Activated CD4-positive, alpha-beta T cell treated with anti-CD3 and anti-CD28 coated beads for 36 hours (primary cell): ENCODE measurements at regions of chr2 and their contacts with region 1.

Region 1: GRCh38 chr2:240205348-240205747 is 64.9 kb upstream of the OTOS start:
- DNase-seq: peak; percentile 87
- ATAC-seq: peak; percentile 99
- H3K4me3 Mint-ChIP-seq: no peak overlapping the region
- H3K27ac Mint-ChIP-seq: no peak overlapping the region
- H3K4me1 Mint-ChIP-seq: peaks cover 10% of the 10 kb centered on the region
- H3K27me3 Mint-ChIP-seq: peaks cover 29% of the 10 kb centered on the region

Region 2: DNA sequence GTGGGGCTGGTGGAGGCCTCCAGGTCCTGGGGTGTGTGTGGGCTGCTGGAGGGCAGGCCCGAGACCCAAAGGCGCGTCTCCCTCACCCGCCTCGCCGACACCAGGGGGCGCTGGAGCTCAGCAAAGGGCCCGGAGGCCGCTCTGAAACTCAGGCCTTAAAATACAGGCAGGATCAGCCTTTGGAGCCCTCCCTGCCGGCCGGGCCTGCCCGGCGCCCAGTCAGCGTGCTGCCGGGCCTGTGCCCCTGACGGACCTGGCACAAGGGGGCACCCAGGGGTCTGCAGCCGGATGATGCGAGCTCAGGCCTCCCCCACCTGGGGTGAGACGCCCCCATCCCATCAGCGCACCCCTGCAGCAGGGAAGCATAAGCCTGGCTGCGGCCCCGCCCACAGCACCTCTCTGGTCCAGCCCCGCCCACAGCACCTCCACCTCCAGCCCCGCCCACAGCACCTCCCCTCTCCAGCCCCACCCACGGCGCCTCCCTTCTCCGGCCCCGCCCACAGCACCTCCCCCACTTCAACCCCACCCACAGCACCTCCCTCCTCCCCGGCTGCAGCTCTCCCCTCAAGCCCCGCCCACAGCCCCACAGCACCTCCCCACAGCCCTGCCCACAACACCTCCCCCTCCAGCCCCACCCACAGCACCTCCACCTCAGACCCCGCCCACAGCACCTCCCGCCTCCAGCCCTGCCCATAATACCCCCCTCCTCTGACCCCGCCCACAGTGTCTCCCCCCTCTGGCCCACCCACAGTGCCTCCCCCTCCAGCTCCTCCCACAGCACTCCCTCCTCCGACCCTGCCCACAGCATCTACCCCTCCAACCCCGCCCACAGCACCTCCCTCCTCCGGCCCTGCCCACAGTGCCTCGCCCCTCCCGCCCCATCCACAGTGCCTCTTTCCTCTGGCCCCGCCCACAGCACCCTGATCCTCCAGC is 27.9 kb after region 1 on chr2:
- CTCF ChIA-PET with region 1: interaction called, 3 read pairs
- POLR2A ChIA-PET with region 1: interaction called, 3 read pairs
- intact Hi-C with region 1: loop called in 1 of 2 experiments (anchors 1 kb)
- DNase-seq: peak; percentile 88
- ATAC-seq: peak; percentile 70
- H3K4me3 Mint-ChIP-seq: no peak overlapping the region
- H3K27ac Mint-ChIP-seq: no peak overlapping the region
- H3K4me1 Mint-ChIP-seq: no peaks in the 10 kb centered on the region
- H3K27me3 Mint-ChIP-seq: peaks cover 11% of the 10 kb centered on the region